Naive thymus-derived CD8-positive, alpha-beta T cell (primary cell): ENCODE measurements at regions of chr3 and their contacts with region 1.

Region 1: GRCh38 chr3:51995346-51996163 is at the start of gene RPL29:
- DNase-seq: peak; percentile 78 to 94 (median 92)
- ATAC-seq: peak; percentile 95 to 97
- H3K4me3 Mint-ChIP-seq: peak within 1 kb of the TSS; percentile 95 to 100 (median 100)
- H3K27ac Mint-ChIP-seq: peak within 1 kb of the TSS; percentile 99 to 100 (median 100)
- H3K4me1 Mint-ChIP-seq: peaks cover 15 to 41% (median 31%) of the 10 kb centered on the region in 4 donors
- H3K27me3 Mint-ChIP-seq: peaks cover 0 to 1% (median 0%) of the 10 kb centered on the region in 5 donors
- polyA plus RNA-seq, gene RPL29: 1,632 to 1,741 (median 1,693) TPM

Region 2: GRCh38 chr3:51941798-51942602 is 53.6 kb before region 1 on chr3 and contains the starts of genes PARP3 and RRP9:
- POLR2A ChIA-PET with region 1: interaction called, 16 read pairs
- DNase-seq: peak; percentile 97 to 100 (median 99)
- ATAC-seq: peak; percentile 91 to 93
- H3K4me3 Mint-ChIP-seq: peak within 1 kb of the TSS; percentile 83 to 98 (median 93)
- H3K27ac Mint-ChIP-seq: peak within 1 kb of the TSS; percentile 76 to 95 (median 91)
- H3K4me1 Mint-ChIP-seq: peaks cover 16 to 47% (median 41%) of the 10 kb centered on the region in 4 donors
- H3K27me3 Mint-ChIP-seq: no peaks in the 10 kb centered on the region
- polyA plus RNA-seq, gene PARP3: 4.6 to 9.0 (median 5.5) TPM
- polyA plus RNA-seq, gene RRP9: 18.1 to 29.6 (median 19.6) TPM

Region 3: GRCh38 chr3:51974963-51975851 is 20.3 kb before region 1 on chr3 and contains the start of gene ABHD14A:
- POLR2A ChIA-PET with region 1: interaction called, 36 read pairs
- DNase-seq: peak; percentile 57 to 81 (median 72)
- ATAC-seq: peak; percentile 70 to 80
- H3K4me3 Mint-ChIP-seq: peak within 1 kb of the TSS; percentile 89 to 97 (median 94)
- H3K27ac Mint-ChIP-seq: peak within 1 kb of the TSS; percentile 91 to 96 (median 95)
- H3K4me1 Mint-ChIP-seq: peaks cover 23 to 54% (median 39%) of the 10 kb centered on the region in 4 donors
- H3K27me3 Mint-ChIP-seq: no peaks in the 10 kb centered on the region
- polyA plus RNA-seq, gene ABHD14A: 94.6 to 100 (median 94.9) TPM

Region 4: DNA sequence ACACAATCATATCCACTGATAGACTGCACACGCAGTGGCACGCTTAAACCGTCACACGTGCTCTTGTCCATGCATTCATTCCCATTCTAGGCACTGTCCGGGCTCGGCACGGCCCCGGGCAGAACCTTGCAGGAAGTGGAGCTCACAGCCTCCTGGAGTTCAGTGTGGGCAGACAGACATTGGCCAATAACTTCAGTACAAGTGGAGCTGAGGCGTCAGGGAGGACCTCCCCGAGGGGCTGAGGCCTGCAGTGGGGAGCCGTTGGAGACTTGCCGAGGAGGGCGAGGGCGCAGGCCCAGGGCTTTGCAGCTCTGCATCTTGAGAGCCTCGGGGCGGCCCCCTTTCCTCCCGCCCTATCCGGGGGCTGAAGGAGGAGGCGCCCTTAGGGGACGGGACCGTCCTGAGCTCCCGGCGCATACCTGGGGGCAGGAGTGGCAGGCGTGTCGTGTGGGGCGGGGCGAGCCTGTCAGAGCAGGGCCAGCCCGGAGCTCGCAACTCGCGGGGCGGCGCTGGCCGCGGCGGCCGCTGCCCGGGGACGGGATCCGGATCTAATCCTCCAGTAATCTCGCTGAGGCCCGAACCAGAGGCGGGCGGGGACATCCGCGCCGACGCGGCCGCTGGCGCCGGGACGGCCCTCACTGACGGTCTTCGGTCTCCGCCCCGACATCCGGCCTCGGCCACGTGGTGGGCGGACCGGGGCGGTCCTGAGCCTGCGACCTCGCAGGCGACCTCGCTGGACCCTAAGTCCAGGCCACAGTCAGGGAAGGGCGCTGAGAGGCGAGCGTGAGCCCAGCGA is 12.6 kb before region 1 on chr3 and contains the start of gene ACY1:
- POLR2A ChIA-PET with region 1: interaction called, 37 read pairs
- DNase-seq: peak; percentile 44 to 79 (median 66)
- ATAC-seq: peak; percentile 85 to 88
- H3K4me3 Mint-ChIP-seq: peak within 1 kb of the TSS; percentile 86 to 99 (median 94)
- H3K27ac Mint-ChIP-seq: peak within 1 kb of the TSS; percentile 91 to 95 (median 94)
- H3K4me1 Mint-ChIP-seq: peaks cover 6 to 36% (median 28%) of the 10 kb centered on the region in 4 donors
- H3K27me3 Mint-ChIP-seq: no peaks in the 10 kb centered on the region
- polyA plus RNA-seq, gene ACY1: 18.5 to 28.5 (median 18.6) TPM

Region 5: DNA sequence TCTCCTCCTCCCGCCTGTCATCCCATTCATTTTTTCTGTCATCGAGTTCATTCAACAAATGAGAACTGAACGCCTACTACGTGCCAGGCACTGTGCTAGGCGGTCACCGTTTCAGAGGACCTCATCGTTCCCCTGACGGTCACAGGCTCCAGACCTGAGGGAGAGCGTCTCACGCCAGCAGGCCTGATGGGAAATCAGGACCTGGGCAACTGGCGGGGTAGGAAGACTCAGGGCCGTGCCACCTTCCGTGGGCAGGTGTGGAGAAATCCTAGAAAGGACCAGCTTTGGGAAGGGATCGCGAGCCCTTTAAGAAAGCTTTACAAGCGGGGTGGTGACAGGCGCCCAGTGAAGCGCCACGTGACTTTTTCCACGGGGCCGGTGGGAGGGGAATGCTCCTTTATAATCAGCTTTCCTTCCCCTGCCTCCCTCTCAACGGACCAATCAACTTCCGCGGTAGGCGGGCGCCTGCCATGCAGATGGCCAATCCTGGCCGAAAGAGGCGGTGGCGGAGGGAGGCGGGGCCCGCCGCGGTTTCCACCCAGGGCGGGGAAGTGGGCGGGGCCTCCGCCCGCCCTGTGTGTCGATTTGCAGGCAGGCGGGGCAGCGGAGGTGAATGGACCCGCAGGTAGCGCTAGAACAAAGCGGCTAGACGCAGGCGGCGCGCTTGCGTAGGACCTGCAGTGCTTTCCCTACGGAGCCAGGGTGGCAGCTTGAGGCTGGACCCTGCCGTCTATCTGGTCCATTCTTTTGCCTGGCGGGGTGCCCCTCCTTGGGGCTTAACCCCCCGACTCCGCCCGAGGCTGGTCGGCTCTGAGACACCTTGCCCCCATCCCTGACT is 61.6 kb after region 1 on chr3:
- POLR2A ChIA-PET with region 1: interaction called, 26 read pairs
- DNase-seq: peak; percentile 92 to 100 (median 99)
- ATAC-seq: peak; percentile 81 to 87
- H3K4me3 Mint-ChIP-seq: peak overlapping the region; percentile 87 to 95 (median 92)
- H3K27ac Mint-ChIP-seq: peak overlapping the region; percentile 85 to 98 (median 93)
- H3K4me1 Mint-ChIP-seq: peaks cover 25 to 39% (median 34%) of the 10 kb centered on the region in 4 donors
- H3K27me3 Mint-ChIP-seq: no peaks in the 10 kb centered on the region

Region 6: GRCh38 chr3:52154117-52155094 is 158.9 kb after region 1 on chr3 and contains the start of gene POC1A:
- POLR2A ChIA-PET with region 1: interaction called, 11 read pairs
- DNase-seq: peak; percentile 70 to 87 (median 80)
- ATAC-seq: peak; percentile 87 to 90
- H3K4me3 Mint-ChIP-seq: peak within 1 kb of the TSS; percentile 86 to 98 (median 96)
- H3K27ac Mint-ChIP-seq: peak within 1 kb of the TSS; percentile 91 to 99 (median 96)
- H3K4me1 Mint-ChIP-seq: peaks cover 2 to 13% (median 8%) of the 10 kb centered on the region in 4 donors
- H3K27me3 Mint-ChIP-seq: no peaks in the 10 kb centered on the region
- polyA plus RNA-seq, gene POC1A: 0.28 to 1.1 (median 0.66) TPM